RWPE1 (cell line): ENCODE measurements at regions of chr11 and their contacts with region 1.

Region 1: DNA sequence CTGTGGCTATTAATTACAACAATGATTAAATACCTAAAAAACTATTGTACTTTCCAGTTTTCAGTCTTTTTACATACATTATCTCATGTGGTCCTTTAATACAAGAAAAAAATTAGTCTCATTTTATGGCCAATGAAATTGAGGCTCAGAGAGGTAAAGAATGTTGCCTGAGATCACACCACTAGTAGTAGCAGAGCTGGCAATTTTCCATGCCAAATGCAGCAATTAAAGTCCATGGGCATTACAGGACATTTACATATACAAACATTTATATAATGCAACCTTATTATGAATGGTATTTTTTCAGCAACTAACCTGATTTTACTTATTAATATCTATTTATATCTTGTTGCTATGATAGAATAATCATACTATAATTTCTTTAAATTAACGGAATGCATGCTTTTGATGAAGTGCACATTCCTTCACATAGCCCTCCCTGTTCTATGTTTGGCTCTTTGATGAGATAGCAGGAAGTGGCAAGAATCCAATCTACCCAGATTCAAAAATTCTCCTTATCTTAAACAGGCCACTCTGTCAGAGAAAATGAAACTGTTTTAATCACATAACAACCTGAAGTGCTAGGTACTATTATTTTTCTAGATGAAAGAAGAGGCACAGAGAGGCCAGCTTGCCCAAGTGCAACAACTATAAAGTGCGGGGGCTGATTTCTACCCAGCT is 120.9 kb upstream of the LDLRAD3 start:
- DNase-seq: no peak
- H3K27ac ChIP-seq: no peak overlapping the region
- CTCF ChIP-seq: no peak

Region 2: GRCh38 chr11:35838071-35838470 is 15.1 kb after region 1 on chr11:
- CTCF ChIA-PET with region 1: interaction called, 19 read pairs
- POLR2A ChIA-PET with region 1: no interaction called
- DNase-seq: no peak
- H3K27ac ChIP-seq: no peak overlapping the region
- CTCF ChIP-seq: no peak

Region 3: DNA sequence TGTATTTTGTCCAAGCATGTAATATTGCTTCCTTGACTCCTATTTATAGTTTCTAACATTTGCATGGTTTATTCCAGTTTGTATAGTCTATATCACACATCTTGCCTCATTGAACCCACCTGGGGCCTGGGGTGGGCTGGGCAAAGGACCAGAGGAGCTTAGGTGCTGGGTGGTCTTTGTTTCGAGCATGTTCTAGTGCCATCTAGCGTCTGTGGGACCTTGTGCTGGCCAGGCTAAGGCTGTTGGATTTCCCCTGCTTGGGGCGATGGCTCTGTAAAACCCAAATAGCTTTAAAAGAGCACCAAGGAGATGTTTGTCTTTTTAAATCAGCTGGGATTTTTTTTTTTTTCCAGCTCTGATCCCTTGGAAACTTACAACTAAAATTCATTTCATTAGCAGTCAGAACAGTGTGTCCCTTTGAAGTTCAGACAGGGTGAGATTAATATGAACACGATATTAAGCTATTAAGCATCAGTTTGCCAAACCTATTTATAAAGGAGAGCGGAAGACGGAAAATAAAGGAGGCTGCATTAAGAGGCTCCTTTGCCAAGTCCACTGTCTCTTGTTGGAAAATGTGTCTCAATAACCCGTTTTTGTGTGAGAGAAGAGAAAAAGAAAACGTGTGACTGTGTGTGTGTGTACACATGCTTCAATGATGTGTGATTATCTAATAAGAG is 308.9 kb after region 1 on chr11:
- CTCF ChIA-PET with region 1: interaction called, 12 read pairs
- POLR2A ChIA-PET with region 1: no interaction called
- DNase-seq: no peak
- H3K27ac ChIP-seq: 0 out of 2 replicates have a peak overlapping the region, but pooled peaks have one; percentile 42
- CTCF ChIP-seq: peak; percentile 77

Region 4: GRCh38 chr11:36258730-36259360 is 435.9 kb after region 1 on chr11:
- CTCF ChIA-PET with region 1: interaction called, 12 read pairs
- POLR2A ChIA-PET with region 1: no interaction called
- DNase-seq: peak; percentile 24
- H3K27ac ChIP-seq: peak overlapping the region; percentile 1; the same call in 1 of the 2 replicates
- CTCF ChIP-seq: no peak